HEK293 (cell line): ENCODE measurements at regions of chr10 and their contacts with region 1.

Region 1: DNA sequence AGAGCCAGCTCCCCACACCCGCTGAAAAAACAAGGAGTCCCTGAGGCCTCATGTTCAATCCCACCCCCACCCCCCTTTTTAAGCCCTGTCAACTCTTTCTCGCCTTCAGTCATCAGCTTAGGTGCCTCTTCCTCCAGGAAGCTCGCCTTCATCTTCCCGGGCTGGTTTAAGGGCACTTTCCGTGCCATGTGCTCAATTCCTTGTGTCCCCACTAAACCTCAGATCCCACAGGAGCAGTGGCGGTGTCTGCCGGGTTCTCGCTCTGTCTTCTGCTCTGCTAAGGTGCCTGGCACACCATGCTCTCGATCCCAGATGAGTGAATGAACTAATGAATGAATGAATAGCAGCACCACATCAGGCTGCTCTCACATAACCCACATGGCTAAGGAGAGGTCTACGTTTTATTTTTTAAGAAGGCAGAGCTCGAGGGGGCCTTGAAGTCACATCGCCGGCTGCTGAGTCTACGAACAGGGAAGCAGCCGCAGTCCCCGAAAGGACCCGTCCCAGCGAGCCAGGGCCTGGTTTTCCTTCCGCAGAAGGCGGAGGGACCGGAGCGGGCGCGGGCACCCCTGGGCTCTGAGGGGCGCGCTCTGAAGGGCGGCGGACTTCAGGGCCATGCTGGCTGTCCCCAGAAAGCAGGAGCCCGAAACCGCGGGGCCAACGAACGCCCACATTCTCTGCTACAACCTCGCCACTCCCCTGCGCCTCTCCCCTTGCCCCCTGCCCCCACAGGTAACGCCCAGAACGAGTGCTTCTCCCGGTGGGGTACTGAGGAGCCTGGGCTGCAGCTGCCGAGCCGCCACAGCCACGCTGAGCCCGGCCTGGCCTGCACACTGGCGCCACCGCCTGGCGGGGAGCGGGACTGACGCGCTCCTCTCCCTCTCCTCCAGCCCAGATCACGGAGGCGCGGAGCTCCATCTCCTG is 73.4 kb upstream of the KCNMA1 start:
- H3K4me3 ChIP-seq: no peak overlapping the region
- H3K27ac ChIP-seq: no peak overlapping the region
- H3K4me1 ChIP-seq: no peaks in the 10 kb centered on the region
- CTCF ChIP-seq: peak; percentile 97

Region 2: DNA sequence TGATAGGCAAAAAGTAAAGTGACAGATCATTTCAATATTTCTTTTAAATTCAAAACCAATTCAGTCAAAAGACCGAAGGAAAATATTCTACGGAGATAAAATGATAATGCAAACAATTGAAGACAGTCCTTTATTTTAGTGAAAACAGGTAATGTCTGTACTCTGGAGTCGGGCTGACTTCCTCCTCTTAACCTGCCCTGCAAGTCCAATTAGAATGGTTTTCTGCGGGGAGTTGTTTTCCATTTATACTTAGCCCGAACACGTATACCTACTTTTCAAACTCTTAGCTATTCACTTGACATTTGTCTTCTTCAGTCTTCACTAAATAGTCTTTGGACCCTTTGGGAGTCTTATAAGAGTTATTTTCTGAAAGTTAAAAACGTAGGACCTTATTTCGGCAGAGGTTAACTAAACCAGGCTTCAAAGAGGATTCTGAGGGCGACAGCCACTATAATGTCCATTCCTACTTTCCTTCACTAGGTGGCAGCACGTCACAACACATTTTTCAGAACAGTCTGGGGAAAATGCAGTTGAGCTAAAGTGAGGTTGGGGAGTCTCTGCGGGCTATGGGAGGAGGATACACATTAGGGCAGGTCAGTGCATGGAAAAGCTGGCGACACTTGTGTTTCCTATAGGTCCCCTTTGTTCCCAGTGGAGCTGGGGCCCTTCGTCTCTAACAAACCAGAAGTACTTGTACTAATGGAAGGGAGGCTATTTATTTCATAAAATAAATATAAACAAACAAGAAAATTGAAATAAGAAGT is 545.4 kb before region 1 on chr10:
- CTCF ChIA-PET with region 1: interaction called, 55 read pairs
- POLR2A ChIA-PET with region 1: no interaction called
- H3K4me3 ChIP-seq: no peak overlapping the region
- H3K27ac ChIP-seq: no peak overlapping the region
- H3K4me1 ChIP-seq: peaks cover 4% of the 10 kb centered on the region; the same call in 1 of the 2 replicates
- CTCF ChIP-seq: peak; percentile 67

Region 3: GRCh38 chr10:77628906-77629730 is 81.9 kb before region 1 on chr10:
- CTCF ChIA-PET with region 1: no interaction called
- POLR2A ChIA-PET with region 1: no interaction called
- H3K4me3 ChIP-seq: no peak overlapping the region
- H3K27ac ChIP-seq: no peak overlapping the region
- H3K4me1 ChIP-seq: no peaks in the 10 kb centered on the region
- CTCF ChIP-seq: no peak

Region 4: GRCh38 chr10:77641788-77642397 is 69.1 kb before region 1 on chr10:
- CTCF ChIA-PET with region 1: interaction called, 25 read pairs
- POLR2A ChIA-PET with region 1: no interaction called
- H3K4me3 ChIP-seq: no peak overlapping the region
- H3K27ac ChIP-seq: no peak overlapping the region
- H3K4me1 ChIP-seq: no peaks in the 10 kb centered on the region
- CTCF ChIP-seq: peak; percentile 31; the same call in 1 of the 2 replicates

Region 5: DNA sequence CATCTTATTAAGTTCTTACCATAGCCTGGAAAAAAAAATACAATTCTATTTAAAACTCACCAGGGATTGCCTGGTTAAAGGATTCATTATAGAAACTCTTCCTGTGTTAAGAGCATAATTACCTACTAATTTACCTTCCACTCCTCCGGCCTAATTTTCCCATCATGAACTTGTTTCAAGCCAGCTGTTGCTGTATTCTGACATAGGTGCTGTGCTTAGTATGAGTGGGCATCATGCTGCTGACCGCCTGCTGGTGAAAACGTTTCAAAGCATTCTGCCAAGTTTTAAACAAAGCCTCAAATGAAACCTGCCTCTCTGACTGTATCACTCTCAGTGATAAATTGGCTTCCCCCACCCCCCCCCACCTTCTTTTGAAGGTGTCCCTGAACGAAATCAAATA is 25.6 kb before region 1 on chr10:
- CTCF ChIA-PET with region 1: interaction called, 65 read pairs
- POLR2A ChIA-PET with region 1: no interaction called
- H3K4me3 ChIP-seq: no peak overlapping the region
- H3K27ac ChIP-seq: no peak overlapping the region
- H3K4me1 ChIP-seq: no peaks in the 10 kb centered on the region
- CTCF ChIP-seq: no peak

Region 6: DNA sequence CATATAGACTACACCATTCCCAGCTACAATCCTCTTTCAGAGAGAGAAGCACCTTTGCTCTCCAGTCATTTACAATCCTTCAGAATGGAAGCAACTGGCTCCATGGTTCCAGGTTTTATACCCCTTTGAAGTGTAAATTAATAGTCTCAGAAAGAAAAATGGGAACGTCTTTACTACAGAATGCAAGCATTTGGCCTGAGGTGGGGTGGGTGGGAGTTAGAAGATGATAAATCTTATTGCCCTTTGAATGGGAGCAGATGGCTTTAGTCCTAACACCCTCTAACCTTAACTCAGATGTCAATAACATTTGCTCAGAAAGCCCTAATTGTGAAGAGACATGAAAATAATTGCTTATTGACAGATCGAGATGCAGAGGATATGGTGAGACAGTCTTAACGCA is 10.8 kb after region 1 on chr10:
- CTCF ChIA-PET with region 1: interaction called, 28 read pairs
- POLR2A ChIA-PET with region 1: no interaction called
- H3K4me3 ChIP-seq: no peak overlapping the region
- H3K27ac ChIP-seq: no peak overlapping the region
- H3K4me1 ChIP-seq: no peaks in the 10 kb centered on the region
- CTCF ChIP-seq: no peak

Region 7: GRCh38 chr10:77793506-77794230 is 82.6 kb after region 1 on chr10:
- CTCF ChIA-PET with region 1: no interaction called
- POLR2A ChIA-PET with region 1: no interaction called
- H3K4me3 ChIP-seq: no peak overlapping the region
- H3K27ac ChIP-seq: no peak overlapping the region
- H3K4me1 ChIP-seq: no peaks in the 10 kb centered on the region
- CTCF ChIP-seq: no peak

Region 8: GRCh38 chr10:77857254-77857653 is 146.2 kb after region 1 on chr10:
- CTCF ChIA-PET with region 1: no interaction called
- POLR2A ChIA-PET with region 1: no interaction called
- H3K4me3 ChIP-seq: no peak overlapping the region
- H3K27ac ChIP-seq: no peak overlapping the region
- H3K4me1 ChIP-seq: no peaks in the 10 kb centered on the region
- CTCF ChIP-seq: no peak